ENCODE measurements at regions of chr15 and their contacts with region 1.

Region 1: DNA sequence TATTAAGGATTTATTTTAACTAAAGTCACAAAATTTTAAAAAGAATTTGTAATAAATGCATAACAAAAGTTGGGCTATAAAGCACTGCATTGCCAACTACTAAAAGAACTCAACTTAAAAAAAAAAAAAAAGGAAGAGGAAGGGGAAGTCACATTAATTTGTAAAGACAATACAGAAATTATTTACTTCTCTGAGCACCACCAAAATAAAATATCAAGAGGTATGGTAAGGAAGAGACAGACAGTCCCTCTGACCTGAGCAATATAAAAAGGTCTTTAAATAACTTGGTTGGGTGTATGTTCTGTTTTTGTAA is 83.5 kb downstream of the UACA start:
- DNase-seq: no peak
- H3K4me3 ChIP-seq: no peak overlapping the region
- H3K27ac ChIP-seq: peak overlapping the region in 1 of 2 experiments; percentile 11; a peak in 1 of 4 replicates
- H3K4me1 ChIP-seq: peaks cover 0 to 4% of the 10 kb centered on the region in 2 experiments; a peak in 1 of 4 replicates
- H3K27me3 ChIP-seq: no peaks in the 10 kb centered on the region
- CTCF ChIP-seq: no peak
- EP300 ChIP-seq: no peak
- RAD21 ChIP-seq: no peak

Region 2: GRCh38 chr15:70690491-70691257 is 10.8 kb after region 1 on chr15:
- CTCF ChIA-PET with region 1: interaction called, 23 read pairs
- POLR2A ChIA-PET with region 1: no interaction called
- DNase-seq: no peak
- H3K4me3 ChIP-seq: no peak overlapping the region
- H3K27ac ChIP-seq: peak overlapping the region; percentile 1 to 39; a peak in 2 of 4 replicates
- H3K4me1 ChIP-seq: peaks cover 5 to 23% of the 10 kb centered on the region in 2 experiments; a peak in 3 of 4 replicates
- H3K27me3 ChIP-seq: no peaks in the 10 kb centered on the region
- CTCF ChIP-seq: no peak
- EP300 ChIP-seq: no peak
- RAD21 ChIP-seq: no peak

Region 3: GRCh38 chr15:70713714-70714414 is 34.0 kb after region 1 on chr15:
- CTCF ChIA-PET with region 1: interaction called, 13 read pairs
- POLR2A ChIA-PET with region 1: no interaction called
- DNase-seq: no peak
- H3K4me3 ChIP-seq: peak overlapping the region in 1 of 2 experiments; percentile 27; a peak in 1 of 4 replicates
- H3K27ac ChIP-seq: peak overlapping the region; percentile 85 to 87
- H3K4me1 ChIP-seq: peaks cover 5 to 19% of the 10 kb centered on the region in 2 experiments; a peak in 3 of 4 replicates
- H3K27me3 ChIP-seq: no peaks in the 10 kb centered on the region
- CTCF ChIP-seq: no peak
- EP300 ChIP-seq: no peak
- RAD21 ChIP-seq: no peak

Region 4: GRCh38 chr15:70799667-70800450 is 120.0 kb after region 1 on chr15:
- CTCF ChIA-PET with region 1: no interaction called
- POLR2A ChIA-PET with region 1: no interaction called
- DNase-seq: no peak
- H3K4me3 ChIP-seq: no peak overlapping the region
- H3K27ac ChIP-seq: peak overlapping the region; percentile 70 to 90; a peak in 3 of 4 replicates
- H3K4me1 ChIP-seq: peaks cover 0 to 50% of the 10 kb centered on the region in 2 experiments; a peak in 3 of 4 replicates
- H3K27me3 ChIP-seq: no peaks in the 10 kb centered on the region
- CTCF ChIP-seq: no peak
- EP300 ChIP-seq: peak in 1 of 2 experiments; percentile 89; a peak in 1 of 4 replicates
- RAD21 ChIP-seq: no peak

Measured in SK-N-SH (cell line).